Sciatic nerve (tissue), 2 donors: ENCODE measurements at regions of chr13 and their contacts with region 1.

Region 1: DNA sequence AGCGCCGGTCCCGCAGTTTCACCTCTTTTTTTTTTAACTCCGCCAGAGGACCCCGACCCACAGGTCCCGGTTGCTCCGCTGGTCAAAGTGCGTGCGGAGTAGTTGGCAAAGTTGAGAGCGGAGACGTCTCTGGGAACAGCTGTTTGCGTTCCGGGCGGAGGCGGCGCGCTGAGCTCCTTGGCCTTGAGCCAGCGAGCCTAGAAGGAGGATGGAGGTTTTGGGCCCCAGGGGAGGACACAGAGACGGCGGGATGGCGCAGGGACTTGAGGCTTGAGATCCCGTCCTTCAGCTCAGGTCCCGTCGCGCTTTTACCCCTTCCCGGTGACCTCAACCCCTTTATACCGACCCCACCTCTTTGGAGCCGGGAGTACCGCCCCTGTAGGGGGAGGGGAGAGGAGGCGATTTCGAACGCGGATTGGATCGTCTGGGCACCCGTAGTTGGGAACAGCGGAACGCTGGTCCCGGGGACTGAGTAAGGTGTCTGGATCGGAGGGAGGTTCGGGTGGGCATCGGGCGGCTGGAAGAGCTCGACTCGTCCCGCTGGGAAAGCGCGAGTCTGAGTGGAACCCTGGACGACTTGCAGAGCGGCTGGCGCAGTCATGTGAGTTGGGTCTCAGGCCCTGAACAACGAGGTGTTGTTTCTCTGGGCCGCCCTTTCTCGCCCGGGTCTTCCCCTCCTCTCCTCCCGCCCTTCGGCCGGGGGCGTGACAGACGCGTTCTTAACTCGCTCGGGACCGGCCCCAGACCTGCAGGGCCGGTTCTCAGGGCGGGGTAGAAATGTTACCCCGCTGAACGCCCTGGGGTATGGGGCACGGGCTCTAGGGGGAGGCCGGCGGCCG is at the start of gene WBP4:
- DNase-seq: peak; percentile 98
- ATAC-seq: peak; percentile 93
- total RNA-seq, gene WBP4: 17.1 TPM

Region 2: DNA sequence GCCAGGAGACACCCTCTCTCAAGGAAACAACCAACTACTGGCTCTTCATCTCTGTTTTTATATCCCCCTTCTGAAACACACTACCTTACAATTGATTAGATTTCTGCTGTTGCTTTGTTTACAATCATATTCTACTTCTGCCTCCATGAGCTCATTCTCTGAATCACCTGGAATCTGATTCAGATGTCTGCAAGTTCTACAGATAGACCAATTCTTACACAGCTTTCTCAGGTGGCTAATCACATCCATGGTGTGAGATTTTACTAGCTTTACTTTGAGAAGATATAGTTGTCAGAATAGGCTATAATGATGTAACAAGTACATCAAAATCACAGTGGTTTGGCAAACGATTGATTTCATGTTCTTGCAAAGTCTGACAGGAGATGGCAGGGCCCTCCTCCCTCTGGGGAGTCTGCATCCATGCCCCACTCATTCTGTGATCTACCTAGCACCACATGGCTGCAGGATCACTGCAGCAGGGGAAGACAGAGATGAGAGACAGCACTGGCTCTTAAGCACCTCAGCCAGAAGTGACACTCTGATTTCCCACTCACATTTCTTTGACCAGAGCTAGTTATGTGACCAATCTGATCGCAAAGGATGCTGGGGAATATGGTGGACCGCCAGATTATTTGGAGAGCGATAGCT is 638.6 kb before region 1 on chr13:
- intact Hi-C with region 1: no loop called
- DNase-seq: no peak
- ATAC-seq: no peak

Region 3: DNA sequence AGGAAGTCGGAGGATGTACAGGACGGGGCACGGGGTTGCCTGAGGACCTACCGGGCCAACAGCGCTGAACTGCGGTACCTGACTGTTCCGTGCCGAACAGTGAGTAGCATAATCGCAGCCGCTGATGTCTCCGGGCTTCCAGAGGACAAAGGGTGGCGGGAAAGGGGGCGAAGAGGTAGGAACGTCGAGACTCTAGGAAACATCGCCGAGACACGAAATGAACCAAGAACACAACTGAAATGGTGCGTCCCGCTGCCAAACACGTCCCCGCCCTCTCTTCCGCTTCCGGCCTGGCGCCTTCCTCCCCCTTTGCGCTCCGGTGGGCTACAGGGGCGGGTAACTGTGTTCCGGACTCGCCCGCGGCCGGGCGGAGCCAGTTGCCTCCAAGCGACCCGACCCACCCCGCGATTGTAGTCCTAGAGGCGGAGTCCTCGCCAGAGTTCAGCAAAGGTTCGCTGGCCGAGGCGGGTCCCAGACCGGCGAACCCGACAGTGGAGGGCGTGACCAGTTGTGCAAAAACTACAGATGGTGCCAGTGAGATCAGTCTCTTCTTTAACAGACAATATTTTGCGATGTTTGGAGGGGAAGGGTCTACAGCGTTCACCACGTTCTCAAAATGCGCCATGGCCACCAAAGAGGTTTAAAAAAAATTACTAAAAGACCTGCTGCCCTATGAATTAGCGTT is 290.2 kb before region 1 on chr13 and contains the start of gene MRPS31:
- intact Hi-C with region 1: loop called (anchors 10 kb)
- DNase-seq: peak; percentile 95
- ATAC-seq: peak; percentile 99
- total RNA-seq, gene MRPS31: 21.1 TPM

Region 4: GRCh38 chr13:41203810-41204209 is 142.5 kb after region 1 on chr13:
- intact Hi-C with region 1: no loop called
- DNase-seq: no peak
- ATAC-seq: no peak